Tibial artery (tissue), 4 donors: ENCODE measurements at regions of chr10 and their contacts with region 1.

Region 1: GRCh38 chr10:29304264-29305030 is 15.6 kb downstream of the LYZL1 start:
- DNase-seq: peak; percentile 58 to 70
- H3K4me3 ChIP-seq: no peak overlapping the region
- H3K27ac ChIP-seq: no peak overlapping the region
- H3K4me1 ChIP-seq: peaks cover 0 to 7% (median 2%) of the 10 kb centered on the region in 4 donors
- H3K27me3 ChIP-seq: no peaks in the 10 kb centered on the region
- CTCF ChIP-seq: peak; percentile 83 to 92

Region 2: GRCh38 chr10:28663576-28664313 is 640.7 kb before region 1 on chr10:
- intact Hi-C with region 1: loop called (anchors 2 kb)
- DNase-seq: peak; percentile 73 to 88
- H3K4me3 ChIP-seq: no peak overlapping the region
- H3K27ac ChIP-seq: peak overlapping the region; percentile 39 to 53
- H3K4me1 ChIP-seq: peaks cover 0 to 26% (median 11%) of the 10 kb centered on the region in 4 donors
- H3K27me3 ChIP-seq: peaks cover 3% of the 10 kb centered on the region in 2 donors
- CTCF ChIP-seq: peak; percentile 95 to 99

Region 3: DNA sequence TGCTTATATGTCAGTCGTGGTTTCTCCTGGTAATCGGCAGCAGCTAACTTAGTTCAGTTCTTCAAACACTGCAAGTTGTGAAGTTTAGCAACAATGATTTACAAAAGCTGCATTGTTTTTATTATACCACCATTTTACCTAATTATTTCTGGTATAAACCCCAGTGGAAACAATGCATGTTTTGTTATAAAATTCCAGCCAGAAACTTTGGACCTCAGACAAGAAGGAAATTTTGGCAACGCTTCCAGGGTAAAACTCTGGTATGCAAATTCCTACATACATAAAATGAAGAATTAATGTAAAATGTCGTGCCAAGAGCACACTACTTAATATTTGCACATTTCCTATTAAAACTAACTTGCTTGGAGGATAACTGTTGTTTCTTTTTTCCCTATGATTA is 292.9 kb before region 1 on chr10:
- intact Hi-C with region 1: loop called (anchors 10 kb)
- DNase-seq: no peak
- H3K4me3 ChIP-seq: no peak overlapping the region
- H3K27ac ChIP-seq: no peak overlapping the region
- H3K4me1 ChIP-seq: peaks cover 0 to 7% (median 0%) of the 10 kb centered on the region in 4 donors
- H3K27me3 ChIP-seq: peaks cover 0 to 5% of the 10 kb centered on the region in 2 donors
- CTCF ChIP-seq: no peak

Region 4: DNA sequence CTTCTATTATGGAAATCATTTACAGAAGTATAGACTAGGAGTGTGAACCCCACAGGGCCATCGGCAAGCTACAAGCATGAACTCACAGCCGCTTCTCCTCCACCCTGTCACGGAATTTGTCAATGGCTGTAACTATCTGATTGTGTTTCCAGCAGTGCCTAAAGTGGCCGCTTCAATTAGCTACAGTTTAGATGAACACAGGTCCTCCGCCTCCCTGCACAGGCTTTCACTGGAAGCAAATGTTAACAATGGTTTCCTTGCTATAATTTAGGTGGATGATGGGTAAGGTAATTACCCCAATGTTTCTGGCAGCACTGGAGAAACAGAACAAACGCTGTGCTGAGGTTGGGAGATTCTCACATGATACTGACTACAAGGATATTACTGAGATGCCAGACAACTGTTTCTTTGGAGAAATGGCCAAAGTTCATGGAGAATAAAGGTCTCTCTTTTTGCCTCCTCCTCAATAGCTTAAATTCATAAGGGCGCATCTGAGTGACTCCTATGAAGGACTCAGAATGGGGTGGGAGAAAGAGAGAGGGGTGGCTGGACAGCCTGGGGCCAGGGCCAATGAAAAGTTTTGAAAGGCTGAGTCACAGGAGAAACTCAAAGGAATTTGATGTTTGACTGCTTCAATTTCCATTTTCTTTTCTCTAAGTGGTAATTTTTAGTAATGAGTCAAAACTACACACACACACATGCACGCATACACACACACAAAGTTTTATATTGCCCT is 251.5 kb after region 1 on chr10:
- intact Hi-C with region 1: no loop called
- DNase-seq: no peak
- H3K4me3 ChIP-seq: no peak overlapping the region
- H3K27ac ChIP-seq: peak overlapping the region; percentile 23 to 61
- H3K4me1 ChIP-seq: peaks cover 0 to 48% (median 18%) of the 10 kb centered on the region in 4 donors
- H3K27me3 ChIP-seq: no peaks in the 10 kb centered on the region
- CTCF ChIP-seq: no peak